SK-N-SH (cell line): ENCODE measurements at regions of chr3 and their contacts with region 1.

Region 1: GRCh38 chr3:151439652-151440129 is 21.2 kb downstream of the IGSF10 start:
- DNase-seq: peak; percentile 50
- H3K4me3 ChIP-seq: no peak overlapping the region; a peak in 1 of 4 replicates
- H3K27ac ChIP-seq: no peak overlapping the region
- H3K4me1 ChIP-seq: peaks cover 0 to 3% of the 10 kb centered on the region in 2 experiments; a peak in 1 of 4 replicates
- H3K27me3 ChIP-seq: no peaks in the 10 kb centered on the region
- CTCF ChIP-seq: peak; percentile 87
- EP300 ChIP-seq: no peak
- RAD21 ChIP-seq: peak; percentile 85

Region 2: DNA sequence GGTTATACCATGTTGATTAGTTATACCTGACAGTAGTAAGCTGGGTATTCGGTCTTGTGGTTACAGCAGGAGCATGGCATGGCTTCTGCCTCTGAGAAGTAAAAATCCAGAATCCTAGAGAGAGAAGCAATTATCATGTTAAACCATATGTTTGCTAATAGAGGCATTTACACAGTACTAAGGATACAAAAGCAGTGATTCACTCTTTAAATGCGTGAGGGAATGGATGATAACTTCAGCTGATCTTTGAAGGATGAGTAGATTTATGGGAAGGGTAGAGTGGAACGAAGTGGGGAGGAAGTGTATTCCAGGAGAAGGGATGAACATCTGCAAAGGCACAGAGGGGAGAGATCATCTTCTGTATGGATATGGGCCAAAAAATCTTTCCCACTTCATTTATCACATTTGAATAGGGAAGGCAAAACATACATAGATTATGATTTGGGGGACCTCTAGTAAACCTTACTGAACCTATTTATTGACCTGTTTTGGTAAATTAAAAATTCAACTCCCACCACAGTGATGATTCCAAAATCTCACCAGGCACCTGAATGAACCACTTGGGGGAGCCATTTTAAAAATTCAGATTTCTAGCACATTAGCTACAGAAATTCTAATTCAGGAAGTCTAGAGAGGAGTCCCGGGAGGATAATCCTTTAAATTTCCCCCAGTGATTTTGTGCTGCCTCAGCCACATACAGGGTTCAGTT is 13.9 kb before region 1 on chr3:
- CTCF ChIA-PET with region 1: interaction called, 15 read pairs
- POLR2A ChIA-PET with region 1: no interaction called
- DNase-seq: no peak
- H3K4me3 ChIP-seq: no peak overlapping the region
- H3K27ac ChIP-seq: no peak overlapping the region
- H3K4me1 ChIP-seq: no peaks in the 10 kb centered on the region
- H3K27me3 ChIP-seq: no peaks in the 10 kb centered on the region
- CTCF ChIP-seq: peak; percentile 58
- EP300 ChIP-seq: no peak
- RAD21 ChIP-seq: no peak

Region 3: DNA sequence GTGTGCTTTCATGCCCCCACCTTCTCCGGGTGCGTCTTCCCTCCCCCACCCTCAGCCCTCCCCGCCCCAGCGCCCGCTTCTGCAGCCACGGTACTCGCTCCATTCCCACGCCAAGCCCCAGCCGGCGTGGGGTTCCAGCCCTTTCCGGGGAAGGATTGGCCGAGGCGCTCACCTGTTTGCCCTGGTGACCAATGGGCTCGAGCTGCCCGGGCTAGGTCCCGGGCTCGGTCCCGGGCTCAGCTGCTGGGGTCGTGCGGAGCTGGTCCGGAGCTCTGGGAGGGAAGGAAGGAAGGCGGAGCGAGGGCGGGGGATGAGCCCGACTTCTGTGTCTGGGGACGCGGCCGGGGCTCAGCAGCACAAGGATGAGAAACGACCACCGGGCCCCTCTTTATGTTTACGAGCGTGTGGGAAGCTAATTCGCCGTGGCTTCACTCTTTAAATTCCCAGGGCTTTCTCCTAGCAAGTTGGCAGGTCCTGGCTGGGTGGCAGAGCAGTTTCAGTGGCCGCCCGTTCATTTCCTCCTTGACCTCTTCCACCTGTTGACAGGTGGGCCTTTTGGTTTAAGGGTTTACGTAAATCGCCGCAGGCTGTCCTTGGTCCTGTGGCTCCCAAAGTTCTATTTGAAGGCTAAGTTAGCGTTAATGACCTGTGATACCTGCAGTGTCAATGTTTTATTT is 21.2 kb after region 1 on chr3 and contains the start of gene IGSF10:
- CTCF ChIA-PET with region 1: interaction called, 22 read pairs
- POLR2A ChIA-PET with region 1: no interaction called
- DNase-seq: peak; percentile 32
- H3K4me3 ChIP-seq: peak within 1 kb of the TSS in 1 of 2 experiments; percentile 43; a peak in 3 of 4 replicates
- H3K27ac ChIP-seq: no peak within 1 kb of the TSS
- H3K4me1 ChIP-seq: no peaks in the 10 kb centered on the region; a peak in 1 of 4 replicates
- H3K27me3 ChIP-seq: peaks cover 10% of the 10 kb centered on the region; the same call in 1 of the 2 replicates
- CTCF ChIP-seq: no peak
- EP300 ChIP-seq: no peak
- RAD21 ChIP-seq: no peak
- polyA plus RNA-seq, gene IGSF10: 15.3 and 18.9 TPM in 2 replicates

Region 4: DNA sequence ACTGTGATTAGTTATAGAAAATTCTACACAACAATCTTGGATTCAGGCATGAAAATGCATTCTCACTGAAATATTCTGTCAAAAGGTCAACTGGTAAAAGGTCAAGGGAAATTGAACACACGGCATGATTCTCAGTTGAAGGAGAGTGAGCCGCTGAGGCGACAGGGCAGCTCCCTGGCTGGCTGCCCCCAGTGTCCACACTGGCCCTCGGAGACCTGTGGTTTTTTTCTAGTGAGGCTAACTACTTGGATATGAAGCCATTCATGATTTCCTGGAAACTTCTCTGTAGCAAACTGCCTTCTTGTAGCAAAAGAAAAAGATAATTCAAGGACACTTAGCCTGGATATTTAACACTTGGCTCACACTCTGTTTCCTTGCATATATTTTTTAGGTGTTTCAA is 331.3 kb after region 1 on chr3:
- CTCF ChIA-PET with region 1: no interaction called
- POLR2A ChIA-PET with region 1: no interaction called
- DNase-seq: no peak
- H3K4me3 ChIP-seq: no peak overlapping the region; a peak in 1 of 4 replicates
- H3K27ac ChIP-seq: peak overlapping the region; percentile 16 to 84; a peak in 3 of 4 replicates
- H3K4me1 ChIP-seq: peaks cover 0 to 28% of the 10 kb centered on the region in 2 experiments; a peak in 2 of 4 replicates
- H3K27me3 ChIP-seq: no peaks in the 10 kb centered on the region
- CTCF ChIP-seq: no peak
- EP300 ChIP-seq: no peak
- RAD21 ChIP-seq: no peak

Region 5: GRCh38 chr3:151838583-151839312 is 399.1 kb after region 1 on chr3:
- CTCF ChIA-PET with region 1: interaction called, 45 read pairs
- POLR2A ChIA-PET with region 1: no interaction called
- DNase-seq: peak; percentile 31
- H3K4me3 ChIP-seq: peak overlapping the region in 1 of 2 experiments; percentile 45; a peak in 1 of 4 replicates
- H3K27ac ChIP-seq: peak overlapping the region in 1 of 2 experiments; percentile 84; a peak in 2 of 4 replicates
- H3K4me1 ChIP-seq: peaks cover 0 to 26% of the 10 kb centered on the region in 2 experiments
- H3K27me3 ChIP-seq: no peaks in the 10 kb centered on the region
- CTCF ChIP-seq: peak; percentile 90
- EP300 ChIP-seq: no peak
- RAD21 ChIP-seq: peak; percentile 89